Naive thymus-derived CD4-positive, alpha-beta T cell (primary cell): ENCODE measurements at regions of chr9 and their contacts with region 1.

Region 1: GRCh38 chr9:133406480-133407307 is 11.1 kb downstream of the REXO4 start:
- DNase-seq: peak; percentile 59 to 78 (median 71)
- ATAC-seq: peak; percentile 94
- H3K4me3 ChIP-seq: no peak overlapping the region
- H3K4me3 Mint-ChIP-seq: no peak overlapping the region
- H3K27ac ChIP-seq: no peak overlapping the region
- H3K27ac Mint-ChIP-seq: peak overlapping the region in 7 of 9 donors; percentile 1 to 86 (median 51)
- H3K4me1 ChIP-seq: no peaks in the 10 kb centered on the region
- H3K4me1 Mint-ChIP-seq: peaks cover 2 to 14% (median 10%) of the 10 kb centered on the region in 7 donors
- H3K27me3 ChIP-seq: no peaks in the 10 kb centered on the region
- H3K27me3 Mint-ChIP-seq: no peaks in the 10 kb centered on the region

Region 2: GRCh38 chr9:133238851-133239532 is 167.7 kb before region 1 on chr9:
- CTCF ChIA-PET with region 1: no interaction called
- POLR2A ChIA-PET with region 1: no interaction called
- intact Hi-C with region 1: loop called in 1 of 2 experiments (anchors 1 kb)
- DNase-seq: peak; percentile 34 to 72 (median 64)
- ATAC-seq: peak; percentile 93
- H3K4me3 ChIP-seq: peak overlapping the region; percentile 41
- H3K4me3 Mint-ChIP-seq: peak overlapping the region; percentile 57 to 79 (median 69)
- H3K27ac ChIP-seq: no peak overlapping the region
- H3K27ac Mint-ChIP-seq: peak overlapping the region in 1 of 9 donors; percentile 21
- H3K4me1 ChIP-seq: peaks cover 0 to 3% of the 10 kb centered on the region in 2 donors
- H3K4me1 Mint-ChIP-seq: peaks cover 0 to 17% (median 8%) of the 10 kb centered on the region in 7 donors
- H3K27me3 ChIP-seq: peaks cover 0 to 3% of the 10 kb centered on the region in 2 donors
- H3K27me3 Mint-ChIP-seq: peaks cover 9 to 26% (median 12%) of the 10 kb centered on the region in 5 donors

Region 3: DNA sequence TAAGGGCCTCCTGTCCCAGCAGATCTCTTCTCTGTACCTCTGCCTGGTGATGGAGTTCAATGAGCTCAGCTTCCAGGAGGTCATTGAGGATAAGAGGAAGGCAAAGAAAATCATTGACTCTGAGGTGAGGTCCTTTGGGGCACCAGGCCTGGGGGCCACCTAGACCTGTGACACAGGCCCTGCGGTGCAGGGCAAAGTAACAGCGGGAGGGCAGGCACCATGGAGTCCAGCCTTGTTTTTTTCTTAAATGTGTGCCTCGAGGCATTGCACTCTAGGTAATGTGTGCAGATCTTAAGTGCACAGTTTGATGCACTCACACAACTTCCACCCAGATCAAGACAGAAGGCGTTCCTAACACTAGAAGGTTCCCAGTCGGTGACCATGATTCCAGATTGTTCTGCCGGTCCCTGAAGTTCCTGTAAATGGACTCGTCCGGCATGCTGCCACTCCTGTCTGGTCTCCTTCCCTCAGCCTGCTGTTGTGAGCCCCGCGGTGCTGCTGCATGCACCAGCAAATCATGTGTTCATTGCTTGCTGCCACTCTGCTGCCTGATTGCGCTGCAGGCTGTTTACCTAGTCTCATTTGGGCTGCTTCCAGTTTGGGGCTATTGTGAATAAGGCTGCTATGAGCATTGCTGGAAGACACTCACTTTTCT is 19.1 kb before region 1 on chr9:
- CTCF ChIA-PET with region 1: no interaction called
- POLR2A ChIA-PET with region 1: no interaction called
- intact Hi-C with region 1: no loop called
- DNase-seq: no peak
- ATAC-seq: no peak
- H3K4me3 ChIP-seq: no peak overlapping the region
- H3K4me3 Mint-ChIP-seq: no peak overlapping the region
- H3K27ac ChIP-seq: no peak overlapping the region
- H3K27ac Mint-ChIP-seq: no peak overlapping the region
- H3K4me1 ChIP-seq: no peaks in the 10 kb centered on the region
- H3K4me1 Mint-ChIP-seq: no peaks in the 10 kb centered on the region
- H3K27me3 ChIP-seq: no peaks in the 10 kb centered on the region
- H3K27me3 Mint-ChIP-seq: peaks cover 0 to 9% (median 0%) of the 10 kb centered on the region in 5 donors

Region 4: GRCh38 chr9:133440874-133441273 is 34.2 kb after region 1 on chr9:
- CTCF ChIA-PET with region 1: no interaction called
- POLR2A ChIA-PET with region 1: no interaction called
- intact Hi-C with region 1: no loop called
- DNase-seq: no peak
- ATAC-seq: peak; percentile 68
- H3K4me3 ChIP-seq: no peak overlapping the region
- H3K4me3 Mint-ChIP-seq: no peak overlapping the region
- H3K27ac ChIP-seq: no peak overlapping the region
- H3K27ac Mint-ChIP-seq: peak overlapping the region in 2 of 9 donors; percentile 6 to 42
- H3K4me1 ChIP-seq: no peaks in the 10 kb centered on the region
- H3K4me1 Mint-ChIP-seq: peaks cover 0 to 4% (median 0%) of the 10 kb centered on the region in 7 donors
- H3K27me3 ChIP-seq: no peaks in the 10 kb centered on the region
- H3K27me3 Mint-ChIP-seq: no peaks in the 10 kb centered on the region

Region 5: DNA sequence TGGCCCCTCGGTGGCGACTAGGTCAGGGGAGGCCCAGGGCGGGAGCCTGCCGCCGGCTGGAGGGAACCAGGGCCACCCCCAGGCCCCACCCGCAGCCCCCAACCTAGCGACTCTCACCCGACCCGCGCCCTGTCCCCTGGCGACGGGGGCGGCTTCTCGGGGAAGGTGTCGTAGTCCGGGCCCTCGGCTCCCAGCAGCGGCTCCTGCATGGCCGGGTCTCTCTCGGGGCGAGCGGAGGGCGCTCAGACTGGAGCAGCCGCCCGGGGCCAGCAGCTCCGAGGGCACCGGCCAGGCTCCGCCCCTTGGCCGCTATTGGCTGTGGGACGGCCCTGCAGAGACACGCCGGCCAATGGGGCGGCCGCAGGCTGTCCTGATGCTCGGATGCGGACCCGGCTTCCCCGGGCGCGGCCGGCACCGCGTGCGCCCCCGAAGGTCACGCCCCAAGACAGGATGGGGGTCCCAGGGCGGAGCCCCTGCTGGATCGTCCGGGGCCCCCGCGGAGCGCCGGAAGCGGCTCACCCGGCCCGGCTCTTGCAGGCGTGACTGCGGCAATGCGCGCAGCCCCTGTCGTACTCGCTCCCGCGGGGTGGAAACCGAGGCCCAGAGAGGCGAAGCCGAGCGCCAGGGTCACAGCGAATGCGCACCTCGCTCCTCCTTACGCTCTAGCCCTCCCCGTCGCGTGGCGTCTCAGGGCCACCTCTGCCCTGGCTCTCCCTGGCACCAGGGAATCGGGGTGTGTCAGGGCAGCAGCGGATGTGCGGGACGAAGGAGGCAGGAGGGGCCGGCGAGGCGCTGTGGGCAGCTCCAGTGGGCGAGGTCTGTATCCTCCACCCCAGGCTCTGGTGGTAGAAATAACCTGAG is 72.4 kb after region 1 on chr9 and contains the start of gene SLC2A6:
- CTCF ChIA-PET with region 1: no interaction called
- POLR2A ChIA-PET with region 1: no interaction called
- intact Hi-C with region 1: loop called (anchors 2 kb)
- DNase-seq: peak; percentile 64 to 87 (median 74)
- ATAC-seq: peak; percentile 96
- H3K4me3 ChIP-seq: peak within 1 kb of the TSS; percentile 77
- H3K4me3 Mint-ChIP-seq: peak within 1 kb of the TSS; percentile 50 to 83 (median 78)
- H3K27ac ChIP-seq: peak within 1 kb of the TSS; percentile 50
- H3K27ac Mint-ChIP-seq: peak within 1 kb of the TSS in 5 of 9 donors; percentile 48 to 83 (median 60)
- H3K4me1 ChIP-seq: peaks cover 0 to 12% of the 10 kb centered on the region in 2 donors
- H3K4me1 Mint-ChIP-seq: peaks cover 0 to 15% (median 10%) of the 10 kb centered on the region in 7 donors
- H3K27me3 ChIP-seq: no peaks in the 10 kb centered on the region
- H3K27me3 Mint-ChIP-seq: peaks cover 0 to 12% (median 0%) of the 10 kb centered on the region in 5 donors
- total RNA-seq, gene SLC2A6: 2.4 to 34.7 (median 3.6) TPM

Region 6: GRCh38 chr9:133485361-133486260 is 78.9 kb after region 1 on chr9:
- CTCF ChIA-PET with region 1: interaction called, 4 read pairs
- POLR2A ChIA-PET with region 1: no interaction called
- intact Hi-C with region 1: loop called (anchors 1 kb)
- DNase-seq: no peak
- ATAC-seq: no peak
- H3K4me3 ChIP-seq: no peak overlapping the region
- H3K4me3 Mint-ChIP-seq: peak overlapping the region in 3 of 10 donors; percentile 14 to 49 (median 35)
- H3K27ac ChIP-seq: no peak overlapping the region
- H3K27ac Mint-ChIP-seq: peak overlapping the region in 1 of 9 donors; percentile 50
- H3K4me1 ChIP-seq: peaks cover 3 to 5% of the 10 kb centered on the region in 2 donors
- H3K4me1 Mint-ChIP-seq: peaks cover 0 to 7% (median 6%) of the 10 kb centered on the region in 7 donors
- H3K27me3 ChIP-seq: no peaks in the 10 kb centered on the region
- H3K27me3 Mint-ChIP-seq: peaks cover 0 to 6% (median 0%) of the 10 kb centered on the region in 5 donors

Region 7: GRCh38 chr9:133726401-133727276 is 319.9 kb after region 1 on chr9:
- CTCF ChIA-PET with region 1: no interaction called
- POLR2A ChIA-PET with region 1: no interaction called
- intact Hi-C with region 1: loop called in 1 of 2 experiments (anchors 5 kb)
- DNase-seq: peak in 8 of 9 donors; percentile 46 to 69 (median 64)
- ATAC-seq: peak; percentile 74
- H3K4me3 ChIP-seq: no peak overlapping the region
- H3K4me3 Mint-ChIP-seq: no peak overlapping the region
- H3K27ac ChIP-seq: no peak overlapping the region
- H3K27ac Mint-ChIP-seq: peak overlapping the region in 2 of 9 donors; percentile 10 to 76
- H3K4me1 ChIP-seq: no peaks in the 10 kb centered on the region
- H3K4me1 Mint-ChIP-seq: peaks cover 0 to 9% (median 7%) of the 10 kb centered on the region in 7 donors
- H3K27me3 ChIP-seq: no peaks in the 10 kb centered on the region
- H3K27me3 Mint-ChIP-seq: peaks cover 0 to 14% (median 0%) of the 10 kb centered on the region in 5 donors